ENCODE measurements at regions of chr6 and their contacts with region 1.

Region 1: GRCh38 chr6:35146453-35146852 is 5.3 kb upstream of the TCP11 start:
- DNase-seq: peak; percentile 46
- H3K4me3 Mint-ChIP-seq: no peak overlapping the region
- H3K27ac Mint-ChIP-seq: no peak overlapping the region
- H3K4me1 Mint-ChIP-seq: peaks cover 34% of the 10 kb centered on the region
- H3K27me3 Mint-ChIP-seq: peaks cover 23% of the 10 kb centered on the region

Region 2: DNA sequence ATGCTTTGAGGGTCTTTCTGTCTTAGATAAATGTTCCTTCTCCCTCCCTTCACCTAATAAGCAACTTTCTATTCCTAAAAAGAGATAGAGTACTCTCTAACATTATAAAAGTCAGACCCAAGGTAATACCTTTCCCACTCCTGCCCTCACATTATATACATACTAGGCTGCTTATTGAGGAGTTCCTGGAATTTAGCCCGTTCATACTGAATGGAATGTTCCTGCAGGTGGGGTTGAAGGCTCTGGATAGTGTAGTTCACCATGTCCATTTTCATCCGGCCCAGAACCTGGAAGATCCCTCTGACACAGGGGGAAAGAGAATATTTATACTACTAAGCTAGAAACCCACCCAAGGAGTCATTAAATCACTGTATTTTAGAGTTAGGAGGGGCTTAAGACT is 25.7 kb before region 1 on chr6:
- CTCF ChIA-PET with region 1: no interaction called
- DNase-seq: no peak
- H3K4me3 Mint-ChIP-seq: no peak overlapping the region
- H3K27ac Mint-ChIP-seq: no peak overlapping the region
- H3K4me1 Mint-ChIP-seq: no peaks in the 10 kb centered on the region
- H3K27me3 Mint-ChIP-seq: peaks cover 8% of the 10 kb centered on the region

Region 3: DNA sequence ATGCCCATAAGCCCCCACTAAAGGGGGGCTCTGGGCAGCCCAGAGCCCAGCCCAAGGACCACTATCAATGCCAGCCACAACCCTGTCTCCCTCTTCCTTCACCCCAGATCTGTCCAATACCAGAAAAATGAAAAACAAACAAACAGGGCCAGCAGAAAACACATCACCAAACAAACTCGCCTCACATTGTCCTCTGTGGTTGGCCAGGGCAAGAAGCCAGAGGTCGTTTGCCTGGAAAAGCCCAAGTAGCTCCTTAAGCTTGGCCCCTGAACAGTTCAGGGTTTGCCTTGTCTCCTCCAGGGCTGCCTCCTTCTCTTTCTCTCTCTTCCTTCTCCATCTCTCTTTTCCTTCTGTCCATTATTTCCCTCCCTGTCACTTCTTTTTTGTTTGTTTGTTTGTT is 57.2 kb after region 1 on chr6:
- CTCF ChIA-PET with region 1: interaction called, 125 read pairs
- DNase-seq: no peak
- H3K4me3 Mint-ChIP-seq: no peak overlapping the region
- H3K27ac Mint-ChIP-seq: no peak overlapping the region
- H3K4me1 Mint-ChIP-seq: no peaks in the 10 kb centered on the region
- H3K27me3 Mint-ChIP-seq: peaks cover 78% of the 10 kb centered on the region

Measured in activated naive CD4-positive, alpha-beta T cell treated with anti-CD3 and anti-CD28 coated beads, Interleukin-2, amount 10 ng/mL, durations not matched to agents 7 days and 5 days (primary cell).